ENCODE measurements at regions of chr16 and their contacts with region 1.

Region 1: DNA sequence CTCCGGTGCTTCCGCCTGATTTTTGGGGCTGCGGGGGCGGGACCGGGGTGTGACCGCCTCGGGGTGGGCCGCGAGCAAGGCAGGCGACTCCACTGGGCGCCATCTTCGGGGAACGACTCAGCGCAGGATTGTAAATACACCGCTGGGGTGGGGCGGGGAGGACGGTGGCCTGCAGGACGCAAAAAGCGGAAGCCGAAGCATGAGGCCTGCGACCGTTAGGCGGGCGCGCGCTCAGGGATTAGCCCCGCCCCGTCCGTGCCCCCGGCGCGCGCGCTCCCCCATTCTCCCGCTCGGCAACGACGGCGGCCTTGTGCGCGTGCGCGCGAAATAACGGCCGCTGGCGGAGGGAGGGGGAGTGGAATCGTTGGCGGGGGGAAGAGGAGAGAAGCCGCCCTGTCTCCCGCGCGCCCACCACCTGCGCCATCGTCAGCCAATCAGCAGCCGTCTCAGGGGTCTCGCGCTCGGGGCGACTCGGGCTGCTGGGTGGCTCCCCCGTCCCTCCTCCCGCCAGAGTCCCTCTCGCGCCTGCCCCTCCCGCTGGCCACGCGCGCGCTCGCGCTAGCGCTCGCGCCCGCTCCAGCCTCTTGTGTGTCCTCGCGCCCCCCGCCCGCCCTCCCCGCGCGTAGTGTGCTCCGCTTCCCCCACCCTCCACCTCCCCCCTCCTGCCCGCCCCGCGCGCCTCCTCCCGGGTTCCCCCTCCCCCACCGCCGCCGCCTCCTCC is 791 bp upstream of the MAZ start:
- DNase-seq: peak; percentile 99
- H3K4me3 Mint-ChIP-seq: peak overlapping the region; percentile 92
- H3K27ac Mint-ChIP-seq: peak overlapping the region; percentile 97
- H3K4me1 Mint-ChIP-seq: peaks cover 39% of the 10 kb centered on the region
- H3K27me3 Mint-ChIP-seq: no peaks in the 10 kb centered on the region

Region 2: GRCh38 chr16:29727452-29727851 is 78.1 kb before region 1 on chr16:
- CTCF ChIA-PET with region 1: no interaction called
- POLR2A ChIA-PET with region 1: no interaction called
- intact Hi-C with region 1: no loop called
- DNase-seq: no peak
- H3K4me3 Mint-ChIP-seq: no peak overlapping the region
- H3K27ac Mint-ChIP-seq: no peak overlapping the region
- H3K4me1 Mint-ChIP-seq: peaks cover 22% of the 10 kb centered on the region
- H3K27me3 Mint-ChIP-seq: no peaks in the 10 kb centered on the region

Region 3: GRCh38 chr16:29738514-29738913 is 67.0 kb before region 1 on chr16:
- CTCF ChIA-PET with region 1: no interaction called
- POLR2A ChIA-PET with region 1: no interaction called
- intact Hi-C with region 1: no loop called
- DNase-seq: peak; percentile 62
- H3K4me3 Mint-ChIP-seq: no peak overlapping the region
- H3K27ac Mint-ChIP-seq: peak overlapping the region; percentile 69
- H3K4me1 Mint-ChIP-seq: peaks cover 67% of the 10 kb centered on the region
- H3K27me3 Mint-ChIP-seq: no peaks in the 10 kb centered on the region

Region 4: DNA sequence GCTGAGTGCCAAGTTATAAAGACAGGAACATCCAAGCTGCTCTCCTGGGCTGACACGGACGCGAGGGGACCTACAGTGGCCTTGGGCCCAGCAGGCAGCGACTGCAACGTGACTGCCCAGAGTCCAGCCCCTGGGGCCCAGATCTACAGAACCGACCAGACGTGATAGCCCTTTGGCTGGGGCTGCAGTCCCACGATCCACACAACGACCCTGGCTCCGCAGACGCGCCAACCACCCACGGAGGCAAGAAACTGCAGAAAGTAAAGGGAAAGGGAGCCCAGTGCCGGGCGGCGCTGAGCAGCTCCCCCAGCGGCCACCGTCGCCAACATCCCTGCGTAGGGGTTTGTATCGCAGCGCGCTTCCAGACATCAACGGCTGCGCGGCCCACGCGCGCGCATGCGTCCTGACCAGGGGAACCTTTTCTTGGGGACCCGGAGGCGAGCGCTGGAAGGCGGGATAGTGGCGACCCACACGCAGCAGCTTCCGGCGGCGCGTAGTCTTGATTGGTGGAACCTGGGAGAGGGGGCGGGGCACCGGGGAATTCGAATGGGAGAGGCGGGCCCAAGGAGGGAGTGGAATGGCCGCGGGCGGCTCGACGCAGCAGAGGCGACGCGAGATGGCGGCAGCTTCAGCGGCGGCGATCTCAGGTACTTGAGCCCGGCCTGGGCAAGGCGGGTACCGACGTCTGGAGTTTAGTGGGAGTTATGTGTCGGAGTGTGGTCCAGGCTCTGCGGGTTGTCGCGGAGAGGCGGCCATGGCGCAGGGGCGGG is 15.2 kb before region 1 on chr16 and contains the start of gene KIF22:
- CTCF ChIA-PET with region 1: interaction called, 32 read pairs
- POLR2A ChIA-PET with region 1: interaction called, 29 read pairs
- intact Hi-C with region 1: loop called (anchors 1 kb)
- DNase-seq: peak; percentile 100
- H3K4me3 Mint-ChIP-seq: peak within 1 kb of the TSS; percentile 100
- H3K27ac Mint-ChIP-seq: peak within 1 kb of the TSS; percentile 97
- H3K4me1 Mint-ChIP-seq: peaks cover 38% of the 10 kb centered on the region
- H3K27me3 Mint-ChIP-seq: no peaks in the 10 kb centered on the region
- total RNA-seq, gene KIF22: 174 to 180 TPM

Region 5: DNA sequence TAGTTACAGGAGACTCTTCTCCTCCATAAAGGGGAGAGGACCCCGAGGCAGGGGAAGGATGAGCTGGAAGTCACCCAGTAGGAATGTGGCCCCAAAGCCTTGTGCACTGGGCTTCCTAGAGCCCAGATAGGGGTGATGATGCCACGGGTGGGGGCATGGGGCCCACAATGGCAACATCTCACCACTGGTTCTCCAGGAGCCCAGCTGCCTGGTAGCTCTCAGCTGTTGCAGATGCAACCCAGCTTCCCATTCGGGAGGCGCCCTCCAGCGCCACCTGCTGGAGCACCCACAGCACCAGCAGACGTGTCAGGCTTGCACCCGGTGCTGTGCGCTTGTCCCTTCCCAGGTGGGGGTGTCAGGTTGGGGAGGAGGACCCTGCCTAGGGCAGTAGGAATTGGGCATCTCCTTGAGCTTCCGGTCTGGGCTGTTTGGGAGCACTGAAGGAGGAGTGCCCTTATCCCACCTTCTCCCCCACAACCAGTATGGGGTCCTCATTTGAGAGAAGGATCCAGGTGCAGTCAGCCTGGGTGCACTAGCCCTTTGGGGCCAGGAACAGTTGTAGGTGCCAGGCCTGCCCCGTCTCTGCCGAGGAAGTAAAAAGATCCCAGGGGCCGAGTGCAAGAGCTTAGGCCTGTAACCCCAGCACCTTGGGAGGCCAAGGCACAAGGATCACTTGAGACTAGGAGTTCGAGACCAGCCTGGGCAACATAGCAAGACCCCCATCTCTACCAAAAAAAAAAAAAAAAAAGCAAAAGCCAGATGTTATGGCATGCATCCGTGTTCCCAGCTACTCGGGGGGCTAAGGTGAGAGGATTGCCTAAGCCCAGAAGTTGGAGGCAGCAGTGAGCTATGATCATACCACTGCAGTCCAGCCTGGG is 43.1 kb after region 1 on chr16:
- CTCF ChIA-PET with region 1: interaction called, 62 read pairs
- POLR2A ChIA-PET with region 1: interaction called, 5 read pairs
- intact Hi-C with region 1: loop called (anchors 1 kb)
- DNase-seq: peak; percentile 88
- H3K4me3 Mint-ChIP-seq: no peak overlapping the region
- H3K27ac Mint-ChIP-seq: no peak overlapping the region
- H3K4me1 Mint-ChIP-seq: peaks cover 6% of the 10 kb centered on the region
- H3K27me3 Mint-ChIP-seq: no peaks in the 10 kb centered on the region

Region 6: DNA sequence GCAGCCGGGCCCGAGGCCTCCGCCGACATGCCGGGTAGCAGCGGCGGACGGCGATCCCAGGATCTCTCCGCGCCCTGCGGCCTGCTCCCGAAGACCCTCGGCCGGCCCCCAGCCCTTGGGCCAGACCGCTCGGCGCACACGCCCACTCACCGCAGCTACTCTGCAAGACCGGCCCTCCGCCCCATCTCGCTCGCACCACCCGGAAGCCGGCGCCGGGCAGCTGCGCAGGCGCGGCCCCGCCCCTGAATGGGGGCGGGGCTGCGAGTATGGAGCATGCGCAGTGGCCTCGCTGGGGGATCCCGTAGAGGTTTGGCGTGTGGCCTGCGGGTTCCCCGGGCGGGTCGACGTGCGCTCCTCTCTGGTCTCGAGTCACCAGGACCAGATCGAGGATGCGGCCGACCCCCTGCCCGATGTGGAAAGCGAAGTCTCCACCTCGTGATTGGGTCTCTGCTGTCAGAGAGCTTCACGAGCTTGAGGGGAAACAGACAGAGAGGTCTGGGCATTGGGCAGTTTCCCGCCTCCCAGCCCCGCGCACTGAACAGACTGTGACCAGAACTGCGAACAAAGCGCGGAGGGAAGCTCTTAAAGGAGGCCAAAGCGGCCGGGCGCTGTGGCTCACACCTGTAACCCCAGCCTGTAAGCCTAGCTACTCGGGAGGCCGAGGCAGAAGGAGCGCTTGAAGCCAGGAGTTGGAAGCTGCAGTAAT is 120.6 kb after region 1 on chr16 and contains the start of gene KCTD13:
- CTCF ChIA-PET with region 1: no interaction called
- POLR2A ChIA-PET with region 1: interaction called, 12 read pairs
- intact Hi-C with region 1: no loop called
- DNase-seq: peak; percentile 93
- H3K4me3 Mint-ChIP-seq: peak within 1 kb of the TSS; percentile 82
- H3K27ac Mint-ChIP-seq: peak within 1 kb of the TSS; percentile 89
- H3K4me1 Mint-ChIP-seq: peaks cover 36% of the 10 kb centered on the region
- H3K27me3 Mint-ChIP-seq: no peaks in the 10 kb centered on the region
- total RNA-seq, gene KCTD13: 36.6 to 37.9 TPM

Region 7: DNA sequence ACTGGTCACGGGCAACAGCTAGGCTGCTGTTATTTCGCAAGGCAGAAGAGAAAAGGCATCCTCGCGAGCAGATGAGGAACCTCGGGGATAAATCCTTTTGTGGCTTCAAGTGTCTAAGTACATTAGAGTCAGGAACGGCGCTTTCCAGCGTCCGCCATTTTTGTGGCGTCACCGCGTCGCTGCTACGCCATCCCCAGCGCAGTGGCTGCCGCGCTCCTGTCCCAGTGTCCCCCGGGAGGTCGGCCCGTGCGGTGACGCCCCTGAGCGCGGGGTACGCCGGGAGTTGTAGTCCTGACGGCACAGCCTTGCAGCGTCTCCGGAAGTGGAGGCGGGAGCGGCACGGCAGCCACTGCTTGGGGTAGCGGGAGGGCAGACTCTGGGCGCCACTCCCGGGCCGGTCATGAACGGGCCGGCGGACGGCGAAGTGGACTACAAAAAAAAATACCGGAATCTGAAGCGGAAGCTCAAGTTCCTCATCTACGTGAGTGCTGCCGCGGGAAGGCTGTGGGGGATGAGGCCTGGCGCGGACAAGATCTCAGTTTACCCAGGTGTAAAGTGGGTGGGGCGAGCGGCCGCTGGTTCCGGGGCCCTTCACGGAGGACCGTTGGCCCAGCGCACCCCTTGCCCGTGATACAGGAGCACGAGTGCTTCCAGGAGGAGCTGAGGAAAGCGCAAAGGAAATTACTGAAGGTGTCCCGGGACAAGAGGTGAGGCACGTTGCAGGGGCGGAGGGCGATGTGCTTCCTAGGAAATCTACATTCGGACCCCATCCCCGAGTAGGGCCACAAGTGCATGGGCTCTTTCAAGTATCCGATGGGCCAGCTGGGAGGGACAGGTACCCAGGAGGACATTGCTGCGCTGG is 190.6 kb after region 1 on chr16 and contains the start of gene INO80E:
- CTCF ChIA-PET with region 1: no interaction called
- POLR2A ChIA-PET with region 1: interaction called, 3 read pairs
- intact Hi-C with region 1: loop called (anchors 5 kb)
- DNase-seq: peak; percentile 100
- H3K4me3 Mint-ChIP-seq: peak within 1 kb of the TSS; percentile 99
- H3K27ac Mint-ChIP-seq: peak within 1 kb of the TSS; percentile 99
- H3K4me1 Mint-ChIP-seq: peaks cover 33% of the 10 kb centered on the region
- H3K27me3 Mint-ChIP-seq: no peaks in the 10 kb centered on the region
- total RNA-seq, gene INO80E: 84.1 to 94.0 TPM

Region 8: DNA sequence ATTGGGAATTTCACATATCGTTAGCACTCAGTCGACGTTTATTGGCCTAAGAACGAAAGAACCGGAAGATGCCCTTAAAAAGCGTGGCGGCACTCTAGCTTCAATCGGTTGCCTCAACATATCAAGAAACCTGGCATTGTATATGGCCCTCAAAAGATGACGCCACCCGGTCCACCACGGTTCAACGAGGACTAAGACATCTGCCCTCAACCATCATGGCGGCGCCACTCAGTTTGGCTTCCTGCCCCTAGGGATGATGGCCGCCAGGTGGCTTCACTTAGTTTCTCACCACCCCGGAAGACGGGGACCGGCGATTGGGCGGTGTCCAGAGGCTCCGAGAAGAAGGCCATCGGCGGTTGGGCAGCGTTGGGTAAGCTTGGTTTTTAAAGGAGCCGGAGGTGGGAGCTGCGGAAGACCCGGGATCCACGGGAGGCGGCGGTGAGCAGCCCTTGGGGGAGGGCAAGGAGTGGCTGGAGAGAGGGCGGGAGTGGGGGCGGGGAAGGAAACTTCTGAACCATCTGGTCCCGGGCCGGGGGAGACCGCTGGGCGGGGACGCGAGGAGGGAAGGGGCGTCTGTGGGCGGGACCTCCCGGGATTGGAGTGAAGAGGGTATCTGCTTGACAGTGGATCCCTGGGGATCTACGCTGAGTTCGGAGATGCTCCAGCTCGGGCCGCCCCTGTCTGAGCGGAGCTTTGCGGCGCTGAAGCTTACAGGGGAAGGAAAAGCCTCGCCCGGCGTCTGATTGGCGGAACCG is 845.0 kb after region 1 on chr16 and contains the start of gene PRR14:
- CTCF ChIA-PET with region 1: no interaction called
- POLR2A ChIA-PET with region 1: no interaction called
- intact Hi-C with region 1: loop called (anchors 2 kb)
- DNase-seq: peak; percentile 100
- H3K4me3 Mint-ChIP-seq: peak within 1 kb of the TSS; percentile 92
- H3K27ac Mint-ChIP-seq: peak within 1 kb of the TSS; percentile 96
- H3K4me1 Mint-ChIP-seq: peaks cover 21% of the 10 kb centered on the region
- H3K27me3 Mint-ChIP-seq: no peaks in the 10 kb centered on the region
- total RNA-seq, gene PRR14: 73.2 to 83.2 TPM

Measured in activated CD4-positive, alpha-beta memory T cell treated with anti-CD3 and anti-CD28 coated beads for 36 hours (primary cell).